Activated CD4-positive, alpha-beta memory T cell treated with anti-CD3 and anti-CD28 coated beads for 36 hours (primary cell): ENCODE measurements at regions of chr18 and their contacts with region 1.

Region 1: GRCh38 chr18:80034068-80034851 is at the start of gene RBFA:
- DNase-seq: peak; percentile 100
- H3K4me3 Mint-ChIP-seq: peak within 1 kb of the TSS; percentile 89
- H3K27ac Mint-ChIP-seq: peak within 1 kb of the TSS; percentile 82
- H3K4me1 Mint-ChIP-seq: peaks cover 22% of the 10 kb centered on the region
- H3K27me3 Mint-ChIP-seq: no peaks in the 10 kb centered on the region
- total RNA-seq, gene RBFA: 29.5 to 31.8 TPM

Region 2: DNA sequence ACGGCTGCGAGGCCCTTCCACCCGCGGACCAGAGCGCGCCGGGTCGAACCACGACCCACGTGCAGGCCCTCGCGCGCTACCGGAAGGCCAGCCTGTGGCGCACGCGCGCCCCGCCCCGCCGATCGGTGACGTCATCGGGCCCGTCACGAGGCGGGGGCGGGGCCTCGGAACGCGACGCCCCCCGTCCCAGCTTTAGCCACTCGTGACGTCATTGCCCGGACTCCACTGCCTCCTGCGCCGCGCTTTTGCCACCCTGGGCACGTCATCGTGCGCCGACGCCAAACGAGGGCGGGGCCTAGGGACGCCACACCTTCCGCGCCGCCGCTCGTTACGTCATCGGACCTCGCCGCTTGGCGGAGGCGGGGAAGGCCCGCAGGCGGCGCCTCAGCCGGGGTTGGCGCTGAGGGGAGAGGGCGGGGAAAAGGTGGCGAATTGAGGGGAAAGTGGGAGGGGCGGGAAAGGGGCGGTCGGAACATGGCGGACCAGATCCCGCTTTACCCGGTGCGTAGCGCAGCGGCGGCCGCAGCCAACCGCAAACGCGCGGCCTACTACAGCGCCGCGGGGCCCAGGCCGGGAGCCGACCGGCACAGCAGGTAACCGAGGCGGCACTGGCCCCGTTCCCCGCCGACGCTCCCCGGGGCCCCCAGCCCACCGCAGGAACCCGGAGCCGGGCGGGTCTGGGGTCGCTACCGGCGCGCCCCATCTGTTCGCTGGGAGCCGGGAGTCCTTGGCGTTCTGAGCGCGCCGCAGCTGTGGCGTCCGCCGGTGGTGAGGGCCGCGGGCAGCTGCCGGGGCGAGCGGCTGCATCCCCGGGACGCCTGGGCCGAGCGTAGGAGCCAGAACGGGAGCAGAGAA is 965.1 kb before region 1 on chr18 and contains the start of gene ATP9B:
- CTCF ChIA-PET with region 1: no interaction called
- POLR2A ChIA-PET with region 1: no interaction called
- intact Hi-C with region 1: loop called (anchors 1 kb)
- DNase-seq: peak; percentile 99
- H3K4me3 Mint-ChIP-seq: peak within 1 kb of the TSS; percentile 84
- H3K27ac Mint-ChIP-seq: peak within 1 kb of the TSS; percentile 92
- H3K4me1 Mint-ChIP-seq: peaks cover 35% of the 10 kb centered on the region
- H3K27me3 Mint-ChIP-seq: peaks cover 8% of the 10 kb centered on the region
- total RNA-seq, gene ATP9B: 15.9 to 16.6 TPM

Region 3: DNA sequence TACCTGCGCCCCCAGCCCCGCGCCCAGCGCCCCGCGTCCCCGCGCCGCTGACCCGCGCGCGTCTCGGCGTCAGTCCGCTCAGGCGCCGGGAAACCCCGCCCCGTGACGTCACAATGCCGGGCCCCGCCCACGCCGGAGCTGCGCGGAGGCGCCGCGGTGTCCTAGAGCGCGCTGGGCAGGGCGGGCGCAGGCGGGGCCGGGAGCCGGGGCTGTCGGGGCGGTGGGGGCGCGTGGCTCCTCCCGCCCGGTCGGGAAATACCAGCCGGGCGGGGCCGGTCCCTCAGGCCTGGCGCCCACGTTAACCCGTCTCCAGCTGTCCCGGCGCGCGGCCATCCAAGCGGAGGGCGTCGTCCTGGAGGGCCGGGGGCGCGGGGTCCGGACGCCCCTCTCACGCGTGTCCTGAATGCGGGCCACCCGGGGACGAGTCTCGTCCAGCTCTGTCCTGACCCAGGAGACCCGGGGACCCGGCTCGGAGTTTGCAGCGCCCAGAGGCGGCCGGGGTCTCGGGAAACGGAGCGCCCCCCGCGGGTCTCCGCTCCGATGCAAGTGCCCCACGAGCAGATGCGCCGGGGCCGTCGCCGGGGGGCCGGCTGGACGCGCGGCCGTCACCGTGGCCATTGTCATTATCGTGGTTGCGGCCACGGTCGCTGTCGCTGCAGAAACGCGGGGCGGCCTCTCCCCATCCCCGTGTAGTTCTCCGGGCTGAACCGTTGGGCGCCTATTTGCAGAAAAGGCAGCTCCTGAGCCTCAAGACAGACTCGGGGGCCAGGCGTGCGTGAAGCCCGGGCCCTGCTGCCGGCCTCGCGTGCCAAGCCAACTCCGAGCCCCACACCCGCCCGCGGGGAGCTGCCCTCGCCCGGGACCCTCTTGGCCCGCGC is 82.4 kb before region 1 on chr18 and contains the start of gene SLC66A2:
- CTCF ChIA-PET with region 1: no interaction called
- POLR2A ChIA-PET with region 1: interaction called, 6 read pairs
- intact Hi-C with region 1: loop called (anchors 1 kb)
- DNase-seq: peak; percentile 95
- H3K4me3 Mint-ChIP-seq: peak within 1 kb of the TSS; percentile 79
- H3K27ac Mint-ChIP-seq: peak within 1 kb of the TSS; percentile 42
- H3K4me1 Mint-ChIP-seq: peaks cover 29% of the 10 kb centered on the region
- H3K27me3 Mint-ChIP-seq: no peaks in the 10 kb centered on the region
- total RNA-seq, gene SLC66A2: 27.2 to 29.5 TPM

Region 4: DNA sequence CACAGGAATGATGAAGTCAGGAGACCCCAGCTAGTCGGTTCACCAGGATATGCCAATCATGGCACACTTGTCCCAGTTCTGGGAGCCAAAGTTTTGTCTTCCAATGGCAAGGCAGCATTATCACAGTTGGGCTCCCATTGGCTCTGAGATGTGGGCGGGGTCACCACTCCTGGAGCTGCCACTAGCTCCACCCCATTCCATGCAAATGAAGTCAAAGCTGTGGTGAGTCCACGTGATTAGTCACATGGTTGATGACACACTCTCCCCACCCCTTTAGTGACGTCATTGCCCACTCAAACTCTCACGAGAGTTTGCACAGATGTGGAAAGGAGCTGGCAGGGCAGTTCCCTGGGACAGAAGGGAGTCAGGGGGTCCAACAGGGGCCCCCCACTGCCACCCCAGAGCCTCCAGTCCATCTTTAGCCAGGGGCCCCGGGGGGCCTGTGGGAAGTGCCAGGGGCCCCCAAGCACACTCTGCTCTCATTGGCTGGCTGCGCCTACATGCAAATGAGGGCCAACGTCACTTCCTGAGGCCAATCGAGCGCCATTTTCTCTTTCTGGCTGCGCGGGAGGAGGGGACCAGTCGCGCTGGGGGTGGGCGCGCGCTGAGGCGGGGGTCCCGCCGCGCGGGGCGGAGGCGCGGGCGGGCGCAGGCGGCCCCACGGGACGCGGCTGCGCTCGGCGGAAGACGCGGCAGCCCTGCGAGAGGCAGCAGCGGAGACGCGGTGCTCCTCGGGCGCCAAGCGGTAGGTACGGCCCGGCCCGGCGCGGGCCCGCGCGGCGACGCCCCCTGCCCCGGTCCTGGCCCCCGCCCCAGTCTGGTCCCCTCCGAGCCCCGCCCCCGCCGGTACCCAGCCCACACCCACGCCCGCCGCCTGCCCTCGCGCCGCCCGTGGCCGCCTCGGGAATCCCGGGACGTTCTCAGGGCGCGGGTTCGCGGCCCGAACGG is 74.7 kb after region 1 on chr18 and contains the start of gene ADNP2:
- CTCF ChIA-PET with region 1: interaction called, 3 read pairs
- POLR2A ChIA-PET with region 1: interaction called, 3 read pairs
- intact Hi-C with region 1: loop called (anchors 1 kb)
- DNase-seq: peak; percentile 91
- H3K4me3 Mint-ChIP-seq: peak within 1 kb of the TSS; percentile 80
- H3K27ac Mint-ChIP-seq: peak within 1 kb of the TSS; percentile 74
- H3K4me1 Mint-ChIP-seq: peaks cover 46% of the 10 kb centered on the region
- H3K27me3 Mint-ChIP-seq: no peaks in the 10 kb centered on the region
- total RNA-seq, gene ADNP2: 19.4 to 21.7 TPM

Region 5: DNA sequence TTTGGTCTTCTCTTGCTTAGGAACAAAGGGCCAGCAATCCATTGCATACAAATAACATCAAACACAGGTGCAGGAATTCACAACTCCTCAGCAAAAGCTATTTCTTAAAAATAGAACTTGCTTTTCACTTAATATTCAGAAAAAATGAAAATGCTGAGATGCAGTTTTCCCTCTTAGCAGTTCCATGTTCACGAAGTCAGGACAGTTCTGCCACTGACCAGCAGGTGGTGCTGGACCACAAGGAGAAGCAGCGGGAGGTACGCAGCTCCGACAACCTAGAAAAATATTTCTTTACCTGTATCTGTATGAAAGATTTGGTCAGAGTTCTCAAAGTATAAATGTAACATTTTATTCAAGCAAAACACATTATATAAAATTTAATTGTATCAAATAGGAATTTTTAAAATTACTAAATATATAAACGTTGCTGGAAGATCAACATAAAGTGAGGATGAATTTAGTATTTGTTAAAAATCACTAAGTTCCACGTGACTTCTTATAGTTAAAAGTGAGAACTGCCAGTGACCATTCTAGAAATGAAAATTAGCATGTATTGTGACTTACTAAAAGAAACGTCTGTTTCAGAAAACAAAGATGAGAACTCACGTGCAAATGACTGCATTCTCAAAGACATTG is 123.6 kb after region 1 on chr18:
- CTCF ChIA-PET with region 1: interaction called, 3 read pairs
- POLR2A ChIA-PET with region 1: no interaction called
- intact Hi-C with region 1: loop called (anchors 1 kb)
- DNase-seq: peak; percentile 85
- H3K4me3 Mint-ChIP-seq: no peak overlapping the region
- H3K27ac Mint-ChIP-seq: no peak overlapping the region
- H3K4me1 Mint-ChIP-seq: peaks cover 12% of the 10 kb centered on the region
- H3K27me3 Mint-ChIP-seq: peaks cover 20% of the 10 kb centered on the region